Cardiac septum (tissue), 1 donor: ENCODE measurements at regions of chr1 and their contacts with region 1.

Region 1: GRCh38 chr1:151327223-151327902 is at the start of gene PI4KB:
- DNase-seq: peak; percentile 93
- total RNA-seq, gene PI4KB: 47.7 TPM

Region 2: DNA sequence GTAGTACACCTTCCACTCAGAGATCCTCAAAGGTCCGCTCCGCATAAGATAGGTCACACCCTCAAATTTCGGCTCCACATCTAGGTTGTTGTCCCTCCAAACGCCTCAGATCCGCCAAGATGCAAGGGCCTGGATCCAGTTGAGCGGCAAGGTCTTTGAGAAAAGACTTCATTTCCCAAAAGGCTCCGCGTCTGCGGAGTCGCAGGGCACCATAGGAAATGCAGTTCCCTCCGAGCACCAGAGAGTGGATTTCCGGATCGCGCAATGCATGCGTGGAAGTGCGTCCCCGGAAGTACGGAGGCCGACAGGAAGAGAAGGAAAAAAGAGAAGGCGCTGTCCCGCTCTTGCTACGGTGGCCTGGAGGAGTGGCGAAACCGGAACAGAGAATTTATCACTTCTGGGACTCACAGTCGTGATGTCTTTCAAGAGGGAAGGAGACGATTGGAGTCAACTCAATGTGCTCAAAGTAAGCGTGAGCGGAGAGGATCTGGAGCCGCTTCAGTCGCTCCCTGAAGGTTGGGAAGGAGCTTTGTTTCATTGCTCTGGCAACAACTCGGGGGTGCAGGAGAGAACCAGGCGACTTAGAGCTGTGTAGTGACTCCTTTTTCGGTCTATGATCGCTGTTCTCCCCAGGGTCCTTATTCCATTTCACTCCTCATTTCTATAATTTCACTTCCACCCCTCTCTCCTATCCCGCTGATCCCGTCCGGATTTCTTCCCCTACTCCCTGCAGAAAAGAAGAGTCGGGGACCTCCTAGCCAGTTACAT is 161.4 kb before region 1 on chr1 and contains the starts of genes LYSMD1 and SCNM1:
- intact Hi-C with region 1: loop called (anchors 5 kb)
- DNase-seq: peak; percentile 99
- total RNA-seq, gene LYSMD1: 12.5 TPM
- total RNA-seq, gene SCNM1: 20.7 TPM

Region 3: GRCh38 chr1:151198255-151199127 is 128.9 kb before region 1 on chr1 and contains the start of gene PIP5K1A:
- intact Hi-C with region 1: loop called (anchors 5 kb)
- DNase-seq: peak; percentile 99
- total RNA-seq, gene PIP5K1A: 40.6 TPM

Region 4: GRCh38 chr1:151281969-151282882 is 45.1 kb before region 1 on chr1 and contains the start of gene ZNF687:
- intact Hi-C with region 1: loop called (anchors 1 kb)
- DNase-seq: peak; percentile 100
- total RNA-seq, gene ZNF687: 12.8 TPM

Region 5: GRCh38 chr1:151311589-151312331 is 15.6 kb before region 1 on chr1:
- intact Hi-C with region 1: loop called (anchors 2 kb)
- DNase-seq: no peak

Region 6: DNA sequence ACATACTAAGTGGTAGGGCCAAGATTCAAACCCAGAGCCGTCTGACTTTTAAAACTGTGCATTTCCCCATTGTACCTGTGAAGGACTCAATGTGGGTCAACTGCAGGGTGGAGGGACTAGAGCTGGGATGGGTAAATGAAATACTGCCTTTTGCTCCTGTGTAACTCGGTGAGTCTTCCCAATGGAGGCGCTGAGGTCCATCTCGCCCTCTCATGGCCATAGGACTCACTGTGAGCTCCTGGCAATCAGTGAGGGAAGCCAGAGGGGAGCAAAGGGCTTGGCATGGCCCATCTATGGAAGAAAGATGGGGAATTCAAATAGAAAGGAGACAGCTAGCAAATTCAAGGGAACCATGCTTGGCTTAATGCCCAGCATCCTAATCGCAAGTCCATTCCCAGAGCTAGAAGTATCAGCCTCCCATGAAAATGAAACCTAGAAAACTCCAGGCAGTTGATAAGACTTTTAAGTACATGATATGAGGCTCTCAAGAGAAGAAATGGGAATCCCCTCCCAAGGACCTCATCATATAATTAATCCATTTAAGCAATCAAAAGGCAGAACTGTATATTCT is 158.4 kb after region 1 on chr1:
- intact Hi-C with region 1: no loop called
- DNase-seq: no peak

Region 7: GRCh38 chr1:151565502-151566189 is 238.3 kb after region 1 on chr1:
- intact Hi-C with region 1: no loop called
- DNase-seq: no peak

Region 8: DNA sequence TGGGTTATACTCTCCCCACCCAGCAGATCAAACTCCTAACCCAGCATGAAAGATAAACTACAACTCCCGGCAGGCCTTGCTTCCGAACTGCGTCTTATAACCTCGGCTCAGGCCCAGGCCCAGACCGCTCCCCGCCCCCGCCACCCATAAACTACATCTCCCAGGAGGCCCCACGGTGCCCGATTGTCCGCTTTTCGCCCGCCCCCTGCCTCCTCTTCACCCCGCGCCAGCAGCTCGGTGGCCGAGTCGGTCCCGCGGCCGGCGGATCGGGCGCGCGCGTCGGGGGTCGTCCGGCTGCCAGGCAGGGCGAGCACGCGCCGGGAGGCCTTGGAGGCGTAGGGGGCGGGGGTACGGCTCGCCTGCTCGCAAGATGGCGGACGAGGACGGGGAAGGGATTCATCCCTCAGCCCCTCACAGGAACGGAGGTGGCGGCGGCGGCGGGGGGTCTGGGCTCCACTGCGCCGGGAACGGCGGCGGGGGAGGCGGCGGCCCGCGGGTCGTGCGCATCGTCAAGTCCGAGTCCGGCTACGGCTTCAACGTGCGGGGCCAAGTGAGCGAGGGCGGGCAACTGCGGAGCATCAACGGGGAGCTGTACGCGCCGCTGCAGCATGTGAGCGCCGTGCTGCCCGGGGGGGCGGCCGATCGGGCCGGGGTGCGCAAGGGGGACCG is 284.6 kb after region 1 on chr1 and contains the start of gene SNX27:
- intact Hi-C with region 1: loop called (anchors 10 kb)
- DNase-seq: peak; percentile 95
- total RNA-seq, gene SNX27: 33.5 TPM